ENCODE measurements at regions of chr20 and their contacts with region 1.

Region 1: DNA sequence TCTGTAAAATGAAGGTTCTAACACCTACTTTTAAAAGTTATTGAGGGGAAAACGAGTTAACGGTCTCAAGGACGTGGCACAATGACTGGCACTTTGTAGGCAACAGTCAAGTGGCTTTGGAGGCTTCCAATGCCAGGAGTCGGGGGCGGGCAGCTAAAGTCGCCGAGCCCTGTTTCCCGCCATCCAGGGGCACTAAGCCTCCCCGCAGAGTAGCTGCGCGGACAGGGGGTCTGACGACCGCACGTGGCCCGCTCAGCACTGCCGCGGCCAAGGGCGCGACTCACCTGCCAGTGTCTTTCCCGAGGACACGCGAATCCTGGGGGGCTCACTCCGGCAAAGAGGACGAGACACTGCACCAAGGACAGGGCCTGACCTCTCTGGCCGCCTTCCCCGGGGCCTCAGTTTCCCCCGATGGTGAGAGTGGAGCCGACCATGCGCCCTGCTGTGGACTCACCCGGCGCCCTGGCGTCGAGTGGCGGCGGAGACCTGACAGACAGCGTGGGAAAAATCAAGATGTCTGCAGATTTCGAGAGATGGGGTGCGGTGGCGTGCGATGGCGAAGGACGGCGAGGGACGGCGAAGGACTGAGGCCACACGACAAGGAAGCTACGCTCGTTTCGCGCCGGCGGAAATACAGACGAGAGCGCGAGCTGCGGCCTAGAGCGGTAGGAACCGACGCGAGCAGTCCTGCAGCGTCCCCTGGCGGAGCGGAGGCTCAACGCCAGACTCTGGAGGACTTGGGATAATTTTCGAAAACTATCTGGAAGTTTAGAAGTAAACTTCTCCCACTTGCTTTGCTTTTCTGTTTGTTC is at the start of gene SNHG17:
- DNase-seq: peak; percentile 88 to 94 (median 91)
- ATAC-seq: peak; percentile 65 to 90 (median 85)
- H3K4me3 ChIP-seq: peak within 1 kb of the TSS; percentile 61 to 93 (median 78)
- H3K27ac ChIP-seq: peak within 1 kb of the TSS; percentile 49 to 89 (median 80)
- H3K4me1 ChIP-seq: peaks cover 0 to 25% (median 10%) of the 10 kb centered on the region in 12 donors
- H3K27me3 ChIP-seq: no peaks in the 10 kb centered on the region
- CTCF ChIP-seq: peak; percentile 99 to 100 (median 100)
- POLR2A ChIP-seq: peak in 1 of 2 donors; percentile 71
- total RNA-seq, gene SNHG17: 2.9 to 20.2 (median 5.4) TPM

Region 2: GRCh38 chr20:38446441-38447209 is 11.7 kb after region 1 on chr20:
- intact Hi-C with region 1: loop called in 4 of 10 experiments (anchors 1 kb)
- DNase-seq: peak; percentile 92 to 96 (median 94)
- ATAC-seq: peak; percentile 84 to 95 (median 94)
- H3K4me3 ChIP-seq: peak overlapping the region; percentile 67 to 99 (median 87)
- H3K27ac ChIP-seq: peak overlapping the region; percentile 57 to 94 (median 85)
- H3K4me1 ChIP-seq: peaks cover 0 to 24% (median 11%) of the 10 kb centered on the region in 12 donors
- H3K27me3 ChIP-seq: no peaks in the 10 kb centered on the region
- CTCF ChIP-seq: peak; percentile 92 to 99 (median 96)
- POLR2A ChIP-seq: peak in 1 of 2 donors; percentile 76

Region 3: DNA sequence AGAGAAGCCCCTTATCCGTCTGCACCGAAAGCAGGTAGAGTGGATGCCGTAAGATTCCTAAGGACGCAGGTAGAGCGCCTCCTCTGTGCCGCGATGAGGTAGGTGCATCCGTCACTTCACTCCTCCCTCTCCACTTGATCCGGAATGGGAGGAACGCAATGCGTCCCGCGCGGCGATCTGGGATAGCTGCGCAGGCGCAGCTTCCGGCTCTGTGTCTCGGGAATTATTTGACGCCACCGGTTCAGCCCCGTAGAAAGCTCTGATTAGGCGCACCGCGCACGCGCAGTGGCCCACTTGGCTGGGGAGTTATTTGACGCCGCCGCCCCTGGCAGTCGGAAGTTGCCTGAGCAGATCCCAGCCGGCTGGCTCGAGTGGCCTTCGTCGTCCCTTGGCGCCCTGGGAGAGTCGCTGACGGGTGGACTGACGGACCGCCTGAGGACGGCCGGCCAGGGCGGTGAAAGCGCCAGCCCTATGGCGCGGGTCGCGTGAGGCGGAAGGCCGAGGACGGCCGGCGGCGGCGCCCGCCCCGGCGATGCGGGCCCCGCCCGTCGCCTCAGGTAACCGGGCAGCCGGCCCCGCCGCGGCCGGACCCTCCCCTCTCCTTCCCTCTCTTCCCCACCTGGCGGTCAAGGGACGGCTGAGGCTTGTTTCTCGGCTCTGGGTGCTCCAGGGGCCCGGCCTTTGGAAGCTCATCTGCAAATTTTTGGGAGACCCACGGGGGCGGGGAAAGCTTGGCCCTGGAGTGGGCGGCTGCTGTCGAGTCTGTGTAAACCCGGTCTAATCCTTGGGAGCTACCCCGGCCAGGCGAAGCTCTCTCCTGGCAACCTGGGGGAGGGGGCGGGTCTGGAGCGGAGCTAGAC is 37.8 kb after region 1 on chr20 and contains the start of gene RALGAPB:
- intact Hi-C with region 1: loop called in 4 of 10 experiments (anchors 1 to 5 kb)
- DNase-seq: peak; percentile 99 to 100 (median 99)
- ATAC-seq: peak; percentile 93 to 99 (median 96)
- H3K4me3 ChIP-seq: peak within 1 kb of the TSS; percentile 64 to 95 (median 84)
- H3K27ac ChIP-seq: peak within 1 kb of the TSS; percentile 70 to 94 (median 88)
- H3K4me1 ChIP-seq: peaks cover 0 to 42% (median 22%) of the 10 kb centered on the region in 12 donors
- H3K27me3 ChIP-seq: no peaks in the 10 kb centered on the region
- CTCF ChIP-seq: peak in 9 of 12 donors; percentile 29 to 62 (median 45)
- POLR2A ChIP-seq: peak in 1 of 2 donors; percentile 66
- total RNA-seq, gene RALGAPB: 19.7 to 31.4 (median 26.2) TPM

Region 4: DNA sequence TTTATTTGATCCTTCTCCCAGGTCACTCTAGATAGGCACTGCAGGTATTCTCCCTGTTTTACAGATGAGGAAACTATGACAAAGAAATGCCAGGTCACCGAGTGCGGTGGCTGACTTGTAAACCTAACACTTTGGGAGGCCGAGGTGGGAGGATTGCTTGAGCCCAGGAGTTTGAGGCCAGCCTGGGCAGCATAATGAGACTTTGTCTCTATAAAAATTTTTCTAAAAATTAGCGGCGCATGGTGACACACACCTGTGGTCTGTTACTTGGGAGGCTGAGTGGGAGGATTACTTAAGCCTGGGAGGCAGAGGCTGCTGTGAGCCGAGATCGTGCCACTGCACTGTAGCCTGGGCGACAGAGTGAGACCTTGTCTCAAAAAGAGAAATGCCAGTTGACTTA is 42.8 kb after region 1 on chr20:
- intact Hi-C with region 1: loop called in 4 of 10 experiments (anchors 1 to 5 kb)
- DNase-seq: no peak
- ATAC-seq: no peak
- H3K4me3 ChIP-seq: no peak overlapping the region
- H3K27ac ChIP-seq: no peak overlapping the region
- H3K4me1 ChIP-seq: peaks cover 0 to 35% (median 20%) of the 10 kb centered on the region in 12 donors
- H3K27me3 ChIP-seq: no peaks in the 10 kb centered on the region
- CTCF ChIP-seq: no peak
- POLR2A ChIP-seq: no peak